ENCODE measurements at regions of chr19 and their contacts with region 1.

Region 1: DNA sequence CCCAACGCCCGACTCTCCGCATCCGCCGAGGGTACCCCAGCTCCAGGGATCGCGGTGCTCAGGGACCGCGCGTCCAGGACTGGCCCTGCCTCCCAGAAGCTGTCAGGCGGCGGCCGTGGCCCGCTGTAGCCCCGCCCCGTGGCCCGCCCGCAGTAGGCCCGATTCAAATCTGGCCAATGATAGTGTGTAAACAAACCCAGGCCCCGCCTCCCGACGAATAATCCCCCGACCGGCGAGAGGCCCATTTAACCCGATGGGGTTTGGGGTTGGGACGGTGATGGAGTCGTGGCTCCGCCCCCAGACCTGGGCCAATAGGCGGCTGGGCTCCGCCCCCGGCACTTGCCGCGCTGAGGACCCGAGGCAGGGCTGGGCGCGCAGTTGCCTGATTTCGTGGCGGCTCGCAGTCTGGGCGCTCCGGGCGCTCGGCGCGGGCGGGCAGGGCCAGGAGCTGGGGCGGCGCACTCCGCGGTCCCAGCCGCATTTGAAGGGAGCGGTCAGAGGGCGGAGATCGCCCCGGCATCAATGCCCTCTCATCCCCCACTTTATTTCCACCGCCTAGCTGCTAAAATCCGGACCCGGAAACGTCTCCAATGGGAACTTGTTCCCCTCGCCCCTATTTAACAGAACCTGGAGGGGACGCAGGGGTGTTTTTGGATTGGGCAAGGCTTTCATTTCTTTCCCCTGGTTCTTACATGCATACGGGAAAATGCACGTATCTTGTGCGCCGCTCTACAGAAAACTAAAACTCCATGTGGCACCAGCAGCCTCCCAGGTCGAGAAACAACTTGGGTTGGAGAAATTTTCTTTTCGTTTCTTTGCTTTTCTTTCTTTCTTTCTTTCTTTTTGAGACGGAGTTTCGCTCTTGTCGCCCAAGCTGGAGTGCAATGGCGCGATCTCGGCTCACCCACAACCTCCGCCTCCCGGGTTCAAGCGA is 8.4 kb upstream of the BICRA start:
- DNase-seq: peak; percentile 100
- H3K4me3 ChIP-seq: peak overlapping the region; percentile 46
- H3K4me3 Mint-ChIP-seq: peak overlapping the region; percentile 77
- H3K27ac Mint-ChIP-seq: peak overlapping the region; percentile 87
- H3K4me1 ChIP-seq: peaks cover 24% of the 10 kb centered on the region
- H3K4me1 Mint-ChIP-seq: peaks cover 21% of the 10 kb centered on the region
- H3K27me3 ChIP-seq: no peaks in the 10 kb centered on the region
- H3K27me3 Mint-ChIP-seq: no peaks in the 10 kb centered on the region
- CTCF ChIP-seq: no peak

Region 2: DNA sequence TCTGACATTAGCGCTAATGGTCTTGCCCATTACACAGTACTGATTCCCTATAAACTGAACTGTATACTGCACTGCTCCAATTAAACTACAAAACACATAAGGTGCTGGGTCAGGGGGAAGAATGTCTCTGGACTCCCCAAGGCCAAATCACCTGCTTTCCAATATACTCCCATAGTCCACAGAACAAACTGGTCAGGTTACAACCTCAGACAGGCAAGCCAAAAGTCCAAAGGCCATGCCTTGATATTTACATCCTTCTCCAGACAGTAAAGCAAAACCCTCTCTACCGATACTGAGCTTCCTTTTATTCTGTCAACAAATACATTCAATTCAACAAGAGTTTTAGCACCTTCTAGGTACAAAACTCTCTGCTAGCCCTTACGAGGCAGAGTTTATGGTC is 36.4 kb before region 1 on chr19:
- CTCF ChIA-PET with region 1: no interaction called
- POLR2A ChIA-PET with region 1: no interaction called
- intact Hi-C with region 1: loop called (anchors 1 kb)
- DNase-seq: peak; percentile 62 to 71
- H3K4me3 ChIP-seq: no peak overlapping the region
- H3K4me3 Mint-ChIP-seq: peak overlapping the region; percentile 37
- H3K27ac Mint-ChIP-seq: peak overlapping the region; percentile 69
- H3K4me1 ChIP-seq: peaks cover 22% of the 10 kb centered on the region
- H3K4me1 Mint-ChIP-seq: peaks cover 28% of the 10 kb centered on the region
- H3K27me3 ChIP-seq: no peaks in the 10 kb centered on the region
- H3K27me3 Mint-ChIP-seq: no peaks in the 10 kb centered on the region
- CTCF ChIP-seq: no peak

Region 3: GRCh38 chr19:47613165-47614020 is 12.9 kb after region 1 on chr19:
- CTCF ChIA-PET with region 1: interaction called, 3 read pairs
- POLR2A ChIA-PET with region 1: interaction called, 18 read pairs
- intact Hi-C with region 1: loop called (anchors 1 kb)
- DNase-seq: peak in 1 of 2 experiments; percentile 34
- H3K4me3 ChIP-seq: no peak overlapping the region
- H3K4me3 Mint-ChIP-seq: no peak overlapping the region
- H3K27ac Mint-ChIP-seq: peak overlapping the region; percentile 20
- H3K4me1 ChIP-seq: peaks cover 40% of the 10 kb centered on the region
- H3K4me1 Mint-ChIP-seq: peaks cover 25% of the 10 kb centered on the region
- H3K27me3 ChIP-seq: no peaks in the 10 kb centered on the region
- H3K27me3 Mint-ChIP-seq: no peaks in the 10 kb centered on the region
- CTCF ChIP-seq: no peak

Region 4: GRCh38 chr19:47663841-47664771 is 63.6 kb after region 1 on chr19:
- CTCF ChIA-PET with region 1: interaction called, 7 read pairs
- POLR2A ChIA-PET with region 1: interaction called, 23 read pairs
- intact Hi-C with region 1: loop called (anchors 2 kb)
- DNase-seq: peak; percentile 73
- H3K4me3 ChIP-seq: no peak overlapping the region
- H3K4me3 Mint-ChIP-seq: peak overlapping the region; percentile 53
- H3K27ac Mint-ChIP-seq: peak overlapping the region; percentile 94
- H3K4me1 ChIP-seq: peaks cover 94% of the 10 kb centered on the region
- H3K4me1 Mint-ChIP-seq: peaks cover 65% of the 10 kb centered on the region
- H3K27me3 ChIP-seq: no peaks in the 10 kb centered on the region
- H3K27me3 Mint-ChIP-seq: no peaks in the 10 kb centered on the region
- CTCF ChIP-seq: no peak

Measured in Caco-2 (cell line).